ENCODE measurements at regions of chr18 and their contacts with region 1.

Region 1: GRCh38 chr18:63979409-63979920 is 9.6 kb downstream of the SERPINB8 start:
- DNase-seq: peak; percentile 23
- H3K4me3 Mint-ChIP-seq: no peak overlapping the region
- H3K27ac Mint-ChIP-seq: no peak overlapping the region
- H3K4me1 Mint-ChIP-seq: peaks cover 23% of the 10 kb centered on the region
- H3K27me3 Mint-ChIP-seq: no peaks in the 10 kb centered on the region

Region 2: DNA sequence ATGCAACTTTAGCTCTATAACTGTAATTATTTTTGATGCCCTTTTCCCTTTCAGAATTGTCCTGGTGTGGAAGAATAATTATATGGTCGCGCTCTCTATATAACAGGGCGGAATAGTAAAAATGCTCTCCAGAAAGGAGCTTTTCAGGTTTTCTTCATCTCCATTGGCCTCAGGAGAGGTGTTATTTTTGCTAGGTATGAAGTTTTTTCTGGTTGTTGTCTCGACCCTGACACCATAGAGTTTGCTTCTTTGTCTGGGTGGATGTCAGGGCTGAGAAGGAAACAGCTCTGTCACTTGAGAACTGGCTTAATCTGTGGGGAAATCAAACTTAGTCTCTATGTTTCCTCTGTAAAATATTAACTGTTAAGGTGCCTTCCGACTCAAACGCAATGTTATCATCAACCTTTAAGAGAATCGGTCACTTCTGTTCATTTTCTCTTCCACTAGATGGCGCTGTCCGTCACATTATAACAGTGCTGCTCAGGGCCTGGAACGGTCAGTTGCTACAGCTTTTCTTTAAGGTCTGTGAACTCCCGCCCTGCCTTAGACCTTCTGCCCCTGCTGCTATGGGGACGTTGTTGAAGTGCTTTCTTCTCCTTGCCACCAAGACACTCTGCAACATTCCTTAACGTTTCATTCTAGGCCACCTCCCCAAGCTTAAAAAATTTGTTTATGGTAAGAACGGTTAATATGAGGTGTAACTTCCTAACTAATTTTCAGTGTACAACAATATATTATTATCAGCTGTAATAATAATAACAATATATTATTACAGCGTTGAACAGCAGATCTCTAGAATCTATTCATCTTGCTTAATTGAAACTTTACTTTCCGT is 461.1 kb before region 1 on chr18:
- intact Hi-C with region 1: loop called (anchors 1 kb)
- DNase-seq: peak; percentile 30
- H3K4me3 Mint-ChIP-seq: no peak overlapping the region
- H3K27ac Mint-ChIP-seq: no peak overlapping the region
- H3K4me1 Mint-ChIP-seq: no peaks in the 10 kb centered on the region
- H3K27me3 Mint-ChIP-seq: peaks cover 24% of the 10 kb centered on the region

Region 3: GRCh38 chr18:63823518-63824219 is 155.8 kb before region 1 on chr18:
- intact Hi-C with region 1: loop called (anchors 1 kb)
- DNase-seq: no peak
- H3K4me3 Mint-ChIP-seq: no peak overlapping the region
- H3K27ac Mint-ChIP-seq: no peak overlapping the region
- H3K4me1 Mint-ChIP-seq: peaks cover under 1% of the 10 kb centered on the region
- H3K27me3 Mint-ChIP-seq: peaks cover 12% of the 10 kb centered on the region

Region 4: DNA sequence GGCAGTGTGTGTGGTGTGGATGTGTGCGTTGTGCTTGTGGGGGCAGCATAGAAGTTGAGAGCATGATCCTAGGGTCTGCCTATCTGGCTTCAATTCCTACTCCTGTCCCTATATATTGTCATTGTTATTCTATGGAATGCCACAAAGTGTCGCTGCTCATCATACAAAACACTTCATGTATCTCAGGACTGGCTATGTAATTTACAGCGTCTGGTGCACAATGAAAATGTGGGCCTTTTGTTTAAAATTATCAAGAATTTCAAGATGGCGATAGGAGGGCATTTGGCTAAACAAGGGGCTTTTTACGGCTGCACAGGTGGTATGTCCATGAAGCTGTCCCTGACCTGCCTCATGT is 88.5 kb before region 1 on chr18:
- intact Hi-C with region 1: loop called (anchors 1 kb)
- DNase-seq: no peak
- H3K4me3 Mint-ChIP-seq: no peak overlapping the region
- H3K27ac Mint-ChIP-seq: no peak overlapping the region
- H3K4me1 Mint-ChIP-seq: peaks cover 4% of the 10 kb centered on the region
- H3K27me3 Mint-ChIP-seq: peaks cover 12% of the 10 kb centered on the region

Region 5: DNA sequence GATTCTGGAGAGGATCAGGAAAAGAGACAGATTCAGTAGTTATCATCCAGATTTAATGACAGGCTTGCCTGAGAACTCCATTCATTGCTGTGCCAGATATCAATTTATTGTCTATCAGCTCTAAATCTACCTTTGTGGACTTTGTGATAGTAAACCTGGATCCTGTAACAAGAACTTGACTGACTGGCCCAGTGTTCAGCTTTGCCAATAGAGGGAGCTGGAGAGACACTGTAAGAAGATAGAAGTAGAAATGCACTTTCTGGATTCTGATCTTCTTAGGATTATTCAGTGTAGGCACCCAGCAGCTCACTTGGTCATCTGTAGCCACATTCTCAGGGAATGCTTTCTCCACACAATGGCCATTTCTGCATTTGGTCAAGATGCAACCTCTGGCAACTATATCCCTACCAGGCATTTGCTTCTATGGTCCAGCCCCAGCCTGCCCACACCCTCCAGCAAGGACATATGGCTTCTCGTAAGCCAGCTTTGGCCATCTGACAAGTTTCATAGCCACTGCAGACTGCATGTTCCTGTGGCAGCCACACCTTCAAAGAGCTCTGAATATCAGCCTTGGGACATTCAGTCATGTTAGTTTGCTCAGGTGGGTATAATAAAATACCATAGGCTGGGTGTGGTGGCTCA is 15.7 kb before region 1 on chr18:
- intact Hi-C with region 1: loop called (anchors 2 kb)
- DNase-seq: no peak
- H3K4me3 Mint-ChIP-seq: no peak overlapping the region
- H3K27ac Mint-ChIP-seq: no peak overlapping the region
- H3K4me1 Mint-ChIP-seq: no peaks in the 10 kb centered on the region
- H3K27me3 Mint-ChIP-seq: no peaks in the 10 kb centered on the region

Region 6: DNA sequence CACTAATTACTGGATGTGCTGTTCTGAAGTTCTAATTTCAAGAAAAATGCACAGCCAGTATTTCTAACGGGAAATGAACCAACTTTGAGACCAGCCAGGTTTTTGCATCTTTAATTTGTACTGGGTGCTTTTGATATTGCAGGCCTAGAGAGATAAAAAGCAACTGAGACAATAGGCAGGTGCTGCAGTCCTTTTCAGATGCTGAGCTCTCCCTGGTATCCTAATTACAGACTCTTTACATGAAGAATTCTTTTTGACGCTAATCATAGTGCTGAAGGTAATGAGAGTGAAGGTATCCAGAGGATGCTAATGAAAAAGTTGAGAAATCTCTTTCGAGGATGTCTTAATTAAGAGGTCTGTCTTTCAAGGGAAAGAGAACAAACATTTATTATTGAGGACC is 75.6 kb after region 1 on chr18:
- intact Hi-C with region 1: no loop called
- DNase-seq: no peak
- H3K4me3 Mint-ChIP-seq: no peak overlapping the region
- H3K27ac Mint-ChIP-seq: no peak overlapping the region
- H3K4me1 Mint-ChIP-seq: no peaks in the 10 kb centered on the region
- H3K27me3 Mint-ChIP-seq: no peaks in the 10 kb centered on the region

Measured in activated T-helper 2 cell treated with anti-CD3 and anti-CD28 coated beads, Interferon-gamma antibody, Interleukin-2, Interleukin-4, amounts not matched to agents 10 μg/mL and 5 μg/mL and 100 μg/mL, durations not matched to agents 14 hours and 24 hours and 36 hours (primary cell).